Endothelial cell of umbilical vein (primary cell): ENCODE measurements at regions of chr1 and their contacts with region 1.

Region 1: DNA sequence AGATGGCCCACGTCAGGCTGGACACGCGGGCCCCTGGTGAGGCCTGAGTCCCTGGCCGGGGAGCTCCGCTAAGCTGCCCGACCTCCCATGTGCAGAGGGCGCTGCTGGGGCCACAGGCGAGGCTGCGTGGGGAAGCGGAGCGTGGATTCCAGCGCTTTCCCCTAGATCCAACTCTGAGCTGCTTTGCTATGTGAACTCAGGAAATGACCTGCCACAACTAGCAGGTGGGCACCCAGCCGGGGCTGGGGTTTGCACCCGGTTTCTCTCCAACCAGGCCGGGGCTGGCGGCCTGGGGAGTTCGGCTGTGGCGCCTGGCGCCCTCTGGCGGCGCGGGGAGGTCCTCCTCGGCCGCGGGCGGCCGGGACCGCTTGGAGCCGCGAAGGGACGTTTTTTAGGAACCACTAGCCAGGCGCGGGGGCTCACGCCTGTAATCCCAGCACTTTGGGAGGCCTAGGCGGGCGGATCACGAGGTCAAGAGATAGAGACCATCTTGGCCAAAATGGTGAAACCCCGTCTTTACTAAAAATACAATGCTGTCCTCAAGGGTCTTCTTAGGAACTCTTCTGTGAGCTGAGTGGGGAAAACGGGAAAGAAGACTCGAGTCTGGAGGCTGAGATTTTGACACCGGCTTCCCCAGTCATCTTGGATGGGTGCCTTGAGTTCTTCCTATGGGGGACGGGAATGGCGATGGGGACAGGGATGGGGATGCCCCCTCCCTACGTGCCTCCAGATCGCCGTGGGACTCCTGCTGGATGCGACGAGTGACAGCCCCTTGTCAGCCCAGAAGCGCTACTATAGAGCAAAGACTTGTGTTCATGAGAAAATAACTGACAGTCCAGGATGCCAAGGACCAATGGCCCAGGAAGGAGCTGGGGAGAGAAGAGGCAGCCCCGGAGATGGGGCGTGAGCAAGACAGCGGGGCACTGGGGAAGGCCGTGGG is 12.6 kb downstream of the PYCR2 start:
- DNase-seq: peak; percentile 47
- H3K4me3 ChIP-seq: no peak overlapping the region
- H3K27ac ChIP-seq: no peak overlapping the region
- H3K4me1 ChIP-seq: no peaks in the 10 kb centered on the region
- H3K27me3 ChIP-seq: no peaks in the 10 kb centered on the region
- CTCF ChIP-seq: peak; percentile 88 to 90
- POLR2A ChIP-seq: no peak

Region 2: DNA sequence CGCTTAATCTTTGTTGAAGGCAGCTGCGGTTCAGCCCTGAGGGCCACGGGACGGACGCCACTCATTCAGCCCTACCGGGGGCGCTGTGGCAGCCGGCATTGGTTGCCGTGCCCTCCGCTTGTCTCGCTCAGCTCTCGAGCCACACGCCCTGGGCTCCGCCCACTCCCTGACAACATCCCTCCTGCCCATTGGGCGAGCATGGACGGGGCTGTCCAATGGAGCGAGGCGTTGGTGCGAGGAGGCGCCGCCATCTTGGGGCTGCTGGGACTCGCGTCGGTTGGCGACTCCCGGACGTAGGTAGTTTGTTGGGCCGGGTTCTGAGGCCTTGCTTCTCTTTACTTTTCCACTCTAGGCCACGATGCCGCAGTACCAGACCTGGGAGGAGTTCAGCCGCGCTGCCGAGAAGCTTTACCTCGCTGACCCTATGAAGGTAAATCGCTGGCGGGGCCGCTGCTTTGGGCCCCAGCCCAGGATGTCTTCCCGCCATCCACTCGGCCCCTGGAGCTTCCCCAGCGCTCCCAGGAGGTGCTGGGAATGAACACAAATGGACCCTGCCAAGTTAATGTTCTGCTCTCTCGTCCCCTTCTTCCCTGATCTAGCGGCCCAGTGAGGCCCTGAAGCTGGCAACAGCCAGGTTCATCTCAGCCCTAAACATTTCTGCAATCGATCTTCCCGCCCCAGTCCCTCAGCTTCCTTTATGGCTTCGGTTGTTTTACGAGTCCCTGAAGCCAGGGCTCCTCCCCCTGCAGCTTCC is 133.7 kb before region 1 on chr1 and contains the start of gene SRP9:
- CTCF ChIA-PET with region 1: interaction called, 26 read pairs
- POLR2A ChIA-PET with region 1: no interaction called
- dilution Hi-C with region 1: no loop called
- intact Hi-C with region 1: loop called (anchors 1 kb)
- DNase-seq: peak; percentile 99
- H3K4me3 ChIP-seq: peak within 1 kb of the TSS; percentile 68 to 100 (median 83)
- H3K27ac ChIP-seq: peak within 1 kb of the TSS; percentile 95
- H3K4me1 ChIP-seq: peaks cover 23% of the 10 kb centered on the region
- H3K27me3 ChIP-seq: no peaks in the 10 kb centered on the region
- CTCF ChIP-seq: peak; percentile 94 to 98
- POLR2A ChIP-seq: peak; percentile 85
- total RNA-seq, gene SRP9: 283 and 292 TPM in 2 replicates

Region 3: DNA sequence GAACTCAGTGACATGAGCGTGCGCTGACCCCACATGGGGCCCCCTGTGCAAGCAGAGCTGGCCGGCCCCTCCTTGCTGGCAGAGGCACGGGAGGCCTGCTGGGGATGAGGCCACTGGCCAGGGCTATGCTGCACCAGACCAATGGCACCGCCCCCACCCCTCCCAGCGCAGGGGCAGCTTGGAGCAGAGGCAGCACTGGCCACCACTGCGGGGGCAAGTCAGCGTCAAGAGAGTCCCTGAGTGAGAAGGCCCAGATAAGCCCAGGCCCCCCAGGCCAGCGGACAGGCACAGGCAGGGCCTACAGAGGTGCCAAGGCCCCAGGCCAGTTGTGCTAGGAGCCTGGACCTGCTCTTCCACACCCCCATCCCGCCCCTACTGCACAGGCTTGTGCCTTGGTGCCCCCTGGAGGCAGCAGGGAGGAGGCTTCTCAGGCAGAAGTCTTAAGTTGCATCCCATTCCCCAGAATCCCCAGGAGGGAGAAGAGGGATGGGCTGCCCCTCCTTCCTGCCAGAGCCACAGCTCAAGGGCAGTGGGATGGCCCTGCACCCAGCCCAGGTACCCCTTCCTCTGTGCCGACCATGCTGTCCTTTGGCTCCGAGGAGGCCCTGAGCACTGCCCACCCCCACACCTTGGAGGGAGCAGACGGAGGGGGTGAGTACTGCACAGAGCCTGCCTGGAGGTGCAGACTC is 65.7 kb before region 1 on chr1:
- CTCF ChIA-PET with region 1: interaction called, 8 read pairs
- POLR2A ChIA-PET with region 1: no interaction called
- dilution Hi-C with region 1: no loop called
- intact Hi-C with region 1: loop called (anchors 5 kb)
- DNase-seq: peak; percentile 70
- H3K4me3 ChIP-seq: no peak overlapping the region
- H3K27ac ChIP-seq: no peak overlapping the region
- H3K4me1 ChIP-seq: no peaks in the 10 kb centered on the region
- H3K27me3 ChIP-seq: no peaks in the 10 kb centered on the region
- CTCF ChIP-seq: peak; percentile 72 to 91
- POLR2A ChIP-seq: no peak

Region 4: DNA sequence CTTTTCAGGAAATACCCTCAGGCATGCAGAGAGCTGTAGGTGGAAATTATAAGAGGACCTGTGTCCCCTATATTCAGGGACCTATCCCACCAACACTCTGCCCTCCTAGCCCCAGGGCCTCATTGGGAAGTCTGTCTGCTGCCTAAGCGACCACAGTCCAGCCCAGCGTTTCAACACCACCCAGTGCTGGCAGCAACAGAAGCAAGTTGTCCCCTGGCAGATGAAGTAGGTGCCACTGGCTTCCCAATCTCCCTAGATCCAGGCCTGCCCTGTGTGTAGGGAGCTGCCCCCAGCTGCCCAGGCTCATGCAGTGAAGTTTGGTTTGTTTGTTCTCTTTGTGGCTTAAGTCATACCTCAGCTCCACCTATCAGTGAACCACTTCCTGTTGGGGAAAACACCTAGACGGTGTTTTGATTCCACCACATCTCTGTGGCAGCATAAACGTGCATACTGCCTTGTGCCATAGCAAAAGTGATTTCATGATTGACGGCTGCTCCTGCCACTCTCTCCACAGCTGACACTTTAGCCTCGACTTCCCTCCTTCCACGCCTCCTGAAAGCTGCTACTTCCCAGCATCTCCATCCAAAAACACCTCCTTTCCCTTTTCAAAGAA is 14.4 kb before region 1 on chr1:
- CTCF ChIA-PET with region 1: interaction called, 12 read pairs
- POLR2A ChIA-PET with region 1: no interaction called
- dilution Hi-C with region 1: no loop called
- intact Hi-C with region 1: no loop called
- DNase-seq: no peak
- H3K4me3 ChIP-seq: no peak overlapping the region
- H3K27ac ChIP-seq: no peak overlapping the region
- H3K4me1 ChIP-seq: peaks cover 7% of the 10 kb centered on the region
- H3K27me3 ChIP-seq: no peaks in the 10 kb centered on the region
- CTCF ChIP-seq: no peak
- POLR2A ChIP-seq: no peak

Region 5: GRCh38 chr1:225931270-225932136 is 20.0 kb after region 1 on chr1:
- CTCF ChIA-PET with region 1: interaction called, 11 read pairs
- POLR2A ChIA-PET with region 1: no interaction called
- dilution Hi-C with region 1: no loop called
- intact Hi-C with region 1: no loop called
- DNase-seq: no peak
- H3K4me3 ChIP-seq: no peak overlapping the region
- H3K27ac ChIP-seq: no peak overlapping the region
- H3K4me1 ChIP-seq: no peaks in the 10 kb centered on the region
- H3K27me3 ChIP-seq: no peaks in the 10 kb centered on the region
- CTCF ChIP-seq: no peak
- POLR2A ChIP-seq: no peak